PC-9 (cell line): ENCODE measurements at regions of chr1 and their contacts with region 1.

Region 1: DNA sequence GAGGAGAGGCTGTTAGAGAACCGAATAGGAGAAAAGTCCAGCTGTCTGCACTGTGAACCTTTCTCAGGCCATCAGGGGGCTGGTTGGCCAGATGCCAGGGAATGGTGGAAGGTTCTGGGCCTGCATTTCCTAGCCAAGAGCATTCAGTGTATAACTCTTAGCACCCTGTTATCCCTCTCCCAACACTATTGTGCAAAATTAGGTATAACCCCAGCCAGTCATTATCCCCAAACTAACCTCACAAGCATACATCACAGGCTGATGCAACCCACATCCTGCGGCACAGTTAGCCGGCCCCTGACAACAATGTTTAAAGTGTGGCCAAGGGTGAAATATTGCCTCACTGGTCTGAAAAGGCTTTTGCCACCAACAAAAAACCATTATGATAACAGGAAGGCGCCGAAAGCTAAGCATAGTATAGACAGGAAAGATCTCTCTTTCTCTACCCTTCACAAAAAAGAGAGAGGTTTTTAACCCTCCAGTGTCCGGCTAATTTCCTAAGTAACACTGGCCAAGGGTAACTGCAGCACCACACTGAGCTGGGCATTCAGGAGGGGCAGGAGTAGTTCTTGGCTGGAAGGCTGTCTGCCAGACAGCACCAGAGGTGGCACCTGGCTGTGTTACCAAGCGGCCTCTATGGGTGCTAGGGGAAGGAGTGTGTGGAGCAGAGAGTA is 77.3 kb upstream of the BCAR3 start:
- DNase-seq: peak; percentile 60 to 97
- H3K4me3 ChIP-seq: peak overlapping the region; percentile 20; the same call in 1 of the 2 replicates
- H3K27ac ChIP-seq: peak overlapping the region; percentile 85
- H3K4me1 ChIP-seq: peaks cover 100% of the 10 kb centered on the region
- H3K27me3 ChIP-seq: no peaks in the 10 kb centered on the region
- CTCF ChIP-seq: no peak; the same call in 1 of the 2 replicates

Region 2: GRCh38 chr1:93692983-93693591 is 65.9 kb before region 1 on chr1:
- CTCF ChIA-PET with region 1: no interaction called
- POLR2A ChIA-PET with region 1: no interaction called
- intact Hi-C with region 1: loop called (anchors 2 kb)
- DNase-seq: peak; percentile 74 to 98
- H3K4me3 ChIP-seq: peak overlapping the region; percentile 43
- H3K27ac ChIP-seq: peak overlapping the region; percentile 99
- H3K4me1 ChIP-seq: peaks cover 75% of the 10 kb centered on the region
- H3K27me3 ChIP-seq: no peaks in the 10 kb centered on the region
- CTCF ChIP-seq: no peak

Region 3: GRCh38 chr1:93888896-93889295 is 129.9 kb after region 1 on chr1:
- CTCF ChIA-PET with region 1: no interaction called
- POLR2A ChIA-PET with region 1: no interaction called
- intact Hi-C with region 1: no loop called
- DNase-seq: no peak
- H3K4me3 ChIP-seq: no peak overlapping the region
- H3K27ac ChIP-seq: peak overlapping the region; percentile 4; the same call in 1 of the 2 replicates
- H3K4me1 ChIP-seq: no peaks in the 10 kb centered on the region
- H3K27me3 ChIP-seq: no peaks in the 10 kb centered on the region
- CTCF ChIP-seq: no peak

Region 4: GRCh38 chr1:94648225-94649007 is 889.4 kb after region 1 on chr1:
- CTCF ChIA-PET with region 1: no interaction called
- POLR2A ChIA-PET with region 1: no interaction called
- intact Hi-C with region 1: no loop called
- DNase-seq: peak; percentile 79 to 100
- H3K4me3 ChIP-seq: peak overlapping the region; percentile 32; the same call in 1 of the 2 replicates
- H3K27ac ChIP-seq: peak overlapping the region; percentile 97
- H3K4me1 ChIP-seq: peaks cover 84% of the 10 kb centered on the region
- H3K27me3 ChIP-seq: no peaks in the 10 kb centered on the region
- CTCF ChIP-seq: no peak